Activated T-helper 1 cell treated with anti-CD3 and anti-CD28 coated beads, Interleukin-12 subunit alpha, Interleukin-12 subunit beta, Interleukin-2, Interleukin-4 antibody, amounts not matched to agents 30 ng/mL and 10 ng/mL and 1 ng/mL, durations not matched to agents 14 hours and 24 hours and 36 hours (primary cell): ENCODE measurements at regions of chr1 and their contacts with region 1.

Region 1: GRCh38 chr1:16187748-16188401 is 24.6 kb downstream of the ARHGEF19 start:
- DNase-seq: peak; percentile 63
- H3K4me3 Mint-ChIP-seq: no peak overlapping the region
- H3K27ac Mint-ChIP-seq: no peak overlapping the region
- H3K4me1 Mint-ChIP-seq: no peaks in the 10 kb centered on the region
- H3K27me3 Mint-ChIP-seq: peaks cover 9% of the 10 kb centered on the region

Region 2: GRCh38 chr1:16243936-16244649 is 56.2 kb after region 1 on chr1:
- intact Hi-C with region 1: loop called (anchors 1 kb)
- DNase-seq: peak; percentile 64
- H3K4me3 Mint-ChIP-seq: no peak overlapping the region
- H3K27ac Mint-ChIP-seq: no peak overlapping the region
- H3K4me1 Mint-ChIP-seq: peaks cover 10% of the 10 kb centered on the region
- H3K27me3 Mint-ChIP-seq: no peaks in the 10 kb centered on the region

Region 3: DNA sequence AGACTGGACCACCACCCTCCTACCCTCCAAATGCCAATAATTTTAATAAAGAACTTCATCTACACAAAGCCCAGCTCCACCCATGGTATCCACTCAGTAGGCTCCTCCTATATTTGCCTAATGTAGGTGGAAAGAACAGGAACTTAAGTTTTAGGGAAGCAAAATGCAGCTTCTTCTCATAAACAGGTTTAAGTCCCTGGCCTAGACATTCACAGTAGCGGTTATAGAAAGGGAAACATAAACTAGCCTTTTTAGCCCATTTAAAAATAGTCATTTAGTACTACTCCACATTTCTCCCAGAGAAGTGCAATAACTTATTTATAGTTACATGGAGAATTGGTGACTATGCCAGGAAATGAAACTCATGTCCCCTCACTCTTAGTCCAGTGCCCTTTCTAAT is 105.7 kb after region 1 on chr1:
- intact Hi-C with region 1: no loop called
- DNase-seq: no peak
- H3K4me3 Mint-ChIP-seq: no peak overlapping the region
- H3K27ac Mint-ChIP-seq: no peak overlapping the region
- H3K4me1 Mint-ChIP-seq: no peaks in the 10 kb centered on the region
- H3K27me3 Mint-ChIP-seq: no peaks in the 10 kb centered on the region